ENCODE measurements at regions of chr11 and their contacts with region 1.

Region 1: GRCh38 chr11:125429166-125429707 is 66.8 kb downstream of the FEZ1 start:
- DNase-seq: peak; percentile 90
- ATAC-seq: peak; percentile 66
- H3K4me3 Mint-ChIP-seq: no peak overlapping the region
- H3K27ac Mint-ChIP-seq: no peak overlapping the region
- H3K4me1 Mint-ChIP-seq: peaks cover 36% of the 10 kb centered on the region
- H3K27me3 Mint-ChIP-seq: no peaks in the 10 kb centered on the region
- CTCF ChIP-seq: peak; percentile 48

Region 2: GRCh38 chr11:125141686-125142535 is 287.3 kb before region 1 on chr11:
- CTCF ChIA-PET with region 1: interaction called, 27 read pairs
- POLR2A ChIA-PET with region 1: no interaction called
- DNase-seq: peak; percentile 90
- ATAC-seq: peak; percentile 88
- H3K4me3 Mint-ChIP-seq: peak overlapping the region; percentile 53
- H3K27ac Mint-ChIP-seq: no peak overlapping the region
- H3K4me1 Mint-ChIP-seq: peaks cover 62% of the 10 kb centered on the region
- H3K27me3 Mint-ChIP-seq: peaks cover 89% of the 10 kb centered on the region
- CTCF ChIP-seq: peak; percentile 99

Region 3: DNA sequence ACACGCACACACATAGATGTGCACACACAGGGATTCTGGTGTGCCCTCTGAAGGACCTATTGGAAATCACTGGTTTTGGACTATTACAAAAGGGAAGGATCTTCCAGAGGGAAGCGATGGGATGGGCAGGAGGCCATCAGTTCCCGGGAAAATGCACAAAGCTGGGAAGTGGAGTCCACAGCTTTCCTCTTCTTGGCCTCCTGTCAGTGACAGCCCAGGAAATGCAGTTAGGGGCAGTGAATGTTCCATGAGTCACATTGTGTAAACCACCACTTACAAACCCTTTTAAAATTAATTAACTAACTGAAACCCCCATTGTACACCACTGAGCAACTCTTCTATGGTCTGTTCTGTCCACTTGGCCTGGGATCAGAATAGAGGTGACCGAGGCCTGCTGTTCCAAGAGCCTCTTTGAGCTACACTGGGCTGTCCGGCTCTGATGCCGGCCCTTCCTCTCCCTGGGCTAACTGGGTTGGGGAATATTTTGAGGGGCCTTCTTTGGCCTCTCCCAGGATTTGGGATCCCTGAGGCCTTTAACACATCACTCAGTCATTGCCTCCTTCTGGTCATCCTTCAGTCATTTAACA is 70.9 kb before region 1 on chr11:
- CTCF ChIA-PET with region 1: interaction called, 12 read pairs
- POLR2A ChIA-PET with region 1: interaction called, 3 read pairs
- DNase-seq: no peak
- ATAC-seq: no peak
- H3K4me3 Mint-ChIP-seq: no peak overlapping the region
- H3K27ac Mint-ChIP-seq: no peak overlapping the region
- H3K4me1 Mint-ChIP-seq: no peaks in the 10 kb centered on the region; the same call in 1 of the 2 replicates
- H3K27me3 Mint-ChIP-seq: no peaks in the 10 kb centered on the region; the same call in 1 of the 2 replicates
- CTCF ChIP-seq: no peak

Region 4: DNA sequence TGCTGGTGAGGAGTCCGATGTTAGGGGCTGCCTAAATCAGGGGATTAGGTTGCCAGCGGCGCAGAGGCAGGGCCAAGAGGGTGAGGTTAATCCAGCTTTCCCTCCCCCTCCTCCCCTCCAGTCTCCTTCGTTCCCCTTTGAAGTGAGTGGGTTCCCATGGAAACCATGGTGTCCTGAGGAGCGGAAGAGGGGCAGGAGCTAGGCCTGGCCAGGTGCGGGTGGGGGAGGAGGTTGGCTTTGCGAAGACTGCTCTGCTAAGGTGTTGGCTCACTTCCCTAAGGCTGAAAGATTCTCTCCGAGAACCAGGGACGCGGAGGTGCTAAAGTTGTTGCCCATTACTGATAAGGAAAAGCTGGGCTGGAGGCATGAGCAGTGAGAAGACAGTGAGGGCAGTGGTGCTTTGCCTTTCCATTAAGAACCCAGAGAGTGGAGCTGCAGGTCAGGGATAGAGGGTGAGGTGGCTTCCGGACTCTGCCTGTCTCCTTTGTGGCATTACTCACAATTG is 57.8 kb before region 1 on chr11:
- CTCF ChIA-PET with region 1: interaction called, 35 read pairs
- POLR2A ChIA-PET with region 1: no interaction called
- DNase-seq: peak; percentile 86
- ATAC-seq: peak; percentile 88
- H3K4me3 Mint-ChIP-seq: peak overlapping the region; percentile 64
- H3K27ac Mint-ChIP-seq: peak overlapping the region; percentile 97
- H3K4me1 Mint-ChIP-seq: peaks cover 58% of the 10 kb centered on the region
- H3K27me3 Mint-ChIP-seq: peaks cover 5% of the 10 kb centered on the region
- CTCF ChIP-seq: no peak

Region 5: GRCh38 chr11:125410091-125410490 is 19.1 kb before region 1 on chr11:
- CTCF ChIA-PET with region 1: interaction called, 45 read pairs
- POLR2A ChIA-PET with region 1: no interaction called
- DNase-seq: peak; percentile 67
- ATAC-seq: peak; percentile 83
- H3K4me3 Mint-ChIP-seq: no peak overlapping the region
- H3K27ac Mint-ChIP-seq: no peak overlapping the region
- H3K4me1 Mint-ChIP-seq: peaks cover 21% of the 10 kb centered on the region
- H3K27me3 Mint-ChIP-seq: peaks cover 6% of the 10 kb centered on the region; the same call in 1 of the 2 replicates
- CTCF ChIP-seq: no peak

Region 6: DNA sequence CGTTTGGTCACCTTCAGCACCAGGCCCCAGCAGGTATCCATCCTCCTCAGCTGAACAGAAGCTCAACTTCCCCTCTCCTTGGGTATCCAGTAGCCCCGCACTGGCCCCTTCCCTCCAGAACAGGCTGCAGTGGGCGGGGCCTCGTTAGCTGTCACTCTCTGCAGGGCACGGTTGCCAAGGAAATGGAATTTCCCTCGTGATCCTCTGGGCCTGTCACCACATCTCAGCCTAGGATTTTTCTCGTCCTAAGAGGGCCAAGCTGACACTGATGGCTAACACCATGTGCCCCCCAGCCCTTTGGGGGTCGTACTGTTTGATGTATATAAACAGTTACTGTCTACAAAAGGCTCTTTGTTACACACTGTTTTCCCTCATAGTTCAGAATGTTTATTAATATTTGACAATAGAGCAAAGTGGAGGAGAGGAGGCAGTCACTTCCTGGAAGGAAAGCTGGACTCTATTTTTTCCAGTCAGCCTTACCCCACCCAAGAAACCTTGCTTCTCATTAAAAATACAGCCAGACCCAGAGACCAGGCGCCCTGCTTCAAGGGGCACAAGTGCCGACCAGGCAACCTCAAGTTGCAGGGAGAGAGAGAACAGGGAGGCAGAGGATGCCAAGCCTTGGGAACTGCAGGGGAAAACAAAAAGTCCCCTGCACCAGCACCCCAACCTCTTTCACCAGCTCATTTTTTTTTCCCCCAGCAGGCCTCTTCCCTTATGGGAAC is 22.3 kb after region 1 on chr11:
- CTCF ChIA-PET with region 1: interaction called, 50 read pairs
- POLR2A ChIA-PET with region 1: no interaction called
- DNase-seq: peak; percentile 88
- ATAC-seq: peak; percentile 95
- H3K4me3 Mint-ChIP-seq: no peak overlapping the region
- H3K27ac Mint-ChIP-seq: no peak overlapping the region
- H3K4me1 Mint-ChIP-seq: peaks cover 26% of the 10 kb centered on the region
- H3K27me3 Mint-ChIP-seq: no peaks in the 10 kb centered on the region
- CTCF ChIP-seq: no peak